Activated naive CD8-positive, alpha-beta T cell treated with anti-CD3 and anti-CD28 coated beads, Interleukin-2, amount 10 ng/mL, durations not matched to agents 7 days and 5 days (primary cell): ENCODE measurements at regions of chr21 and their contacts with region 1.

Region 1: GRCh38 chr21:34202553-34203372 is 129.4 kb downstream of the MRPS6 start:
- DNase-seq: no peak
- ATAC-seq: no peak
- H3K4me3 Mint-ChIP-seq: peak overlapping the region; percentile 85
- H3K27ac Mint-ChIP-seq: peak overlapping the region; percentile 78
- H3K4me1 Mint-ChIP-seq: peaks cover 48% of the 10 kb centered on the region
- H3K27me3 Mint-ChIP-seq: no peaks in the 10 kb centered on the region

Region 2: DNA sequence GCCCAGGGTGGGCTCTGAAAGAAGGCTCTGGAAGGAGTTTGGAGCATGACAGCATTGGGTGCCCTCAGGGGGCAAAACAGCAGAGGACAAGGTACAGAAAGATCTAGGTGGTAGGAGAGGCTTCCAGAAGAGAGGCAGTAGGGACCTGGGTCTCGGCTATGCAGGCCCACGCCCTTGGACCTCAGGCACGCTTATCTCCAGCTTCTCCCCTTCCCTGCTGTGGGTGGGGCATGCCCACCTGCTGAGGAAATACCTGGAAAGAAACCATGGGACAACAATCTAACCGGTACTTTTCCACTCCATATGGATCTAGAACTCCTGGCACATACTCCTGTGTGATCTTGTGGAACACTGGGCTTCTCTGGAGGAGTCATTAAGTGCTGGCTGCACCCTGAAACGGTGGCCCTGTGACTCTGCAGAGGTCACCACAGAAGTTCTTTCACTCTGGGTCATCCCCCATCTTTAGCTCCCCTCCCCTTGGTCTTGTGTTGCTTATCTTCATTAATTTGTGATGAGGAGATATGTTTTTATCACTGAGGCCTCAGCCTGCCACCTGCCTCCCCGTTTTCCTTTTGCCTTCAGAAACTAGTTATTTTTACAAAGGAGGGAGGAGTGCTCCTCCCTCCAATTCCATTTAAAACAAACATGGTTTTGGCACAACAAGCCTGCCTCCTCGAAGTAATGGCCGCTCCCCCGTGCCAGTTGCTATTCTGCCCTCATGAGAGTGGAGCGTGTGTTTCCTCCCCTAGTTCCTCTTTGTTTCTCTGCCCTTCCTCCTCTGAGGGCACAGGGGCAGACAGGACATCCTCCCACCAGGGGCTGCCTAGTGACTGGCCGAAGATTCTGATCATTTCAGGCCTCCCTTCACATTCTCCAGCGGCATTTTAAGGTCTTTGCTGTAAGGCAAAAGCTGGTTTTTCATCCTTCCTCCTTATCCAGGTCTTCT is 209.2 kb before region 1 on chr21:
- POLR2A ChIA-PET with region 1: no interaction called
- DNase-seq: no peak
- ATAC-seq: no peak
- H3K4me3 Mint-ChIP-seq: no peak overlapping the region
- H3K27ac Mint-ChIP-seq: peak overlapping the region; percentile 71
- H3K4me1 Mint-ChIP-seq: peaks cover 18% of the 10 kb centered on the region
- H3K27me3 Mint-ChIP-seq: no peaks in the 10 kb centered on the region

Region 3: DNA sequence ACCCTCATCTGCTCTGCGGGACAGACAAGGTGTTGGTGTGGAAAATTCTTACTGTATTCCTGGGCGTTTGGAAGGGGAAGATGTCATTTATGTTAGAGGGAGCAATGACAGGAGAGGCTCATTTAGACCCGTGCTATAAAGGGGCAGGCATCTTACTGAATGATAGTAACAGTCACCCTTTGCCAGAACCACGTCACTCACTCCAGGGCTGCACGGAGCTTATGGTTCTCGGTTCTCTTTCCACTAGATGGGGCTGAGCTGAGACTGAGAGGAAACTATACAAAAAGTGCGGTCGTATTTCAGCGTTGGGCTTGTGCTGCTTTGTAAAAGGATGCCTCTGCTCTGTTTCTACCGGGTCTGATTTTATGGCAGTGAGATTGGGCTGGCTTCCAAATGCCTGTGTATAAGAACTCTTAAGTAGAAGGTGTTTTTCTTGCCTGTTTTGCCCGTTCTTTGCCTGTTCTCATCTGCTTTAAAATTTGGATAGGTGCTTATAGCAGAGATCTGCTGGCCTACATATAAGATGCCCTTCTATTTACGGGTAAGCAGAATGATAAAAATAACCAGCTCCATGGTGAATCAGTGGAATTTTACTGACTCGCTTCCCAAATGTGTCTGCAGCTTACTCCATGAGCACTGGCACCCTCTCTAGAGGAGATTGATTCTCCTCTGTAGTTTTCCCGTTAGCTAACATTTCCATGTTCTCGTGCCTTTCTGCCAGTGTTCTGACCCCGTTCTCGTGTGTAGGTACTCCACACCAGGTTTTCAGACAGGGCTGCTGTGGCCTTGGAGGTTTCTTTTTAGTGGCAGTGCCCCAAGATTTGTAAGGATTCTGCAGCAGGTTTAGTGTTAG is 73.5 kb before region 1 on chr21:
- POLR2A ChIA-PET with region 1: interaction called, 20 read pairs
- DNase-seq: peak; percentile 51
- ATAC-seq: peak; percentile 95
- H3K4me3 Mint-ChIP-seq: peak overlapping the region; percentile 74
- H3K27ac Mint-ChIP-seq: peak overlapping the region; percentile 95
- H3K4me1 Mint-ChIP-seq: peaks cover 67% of the 10 kb centered on the region
- H3K27me3 Mint-ChIP-seq: no peaks in the 10 kb centered on the region

Region 4: DNA sequence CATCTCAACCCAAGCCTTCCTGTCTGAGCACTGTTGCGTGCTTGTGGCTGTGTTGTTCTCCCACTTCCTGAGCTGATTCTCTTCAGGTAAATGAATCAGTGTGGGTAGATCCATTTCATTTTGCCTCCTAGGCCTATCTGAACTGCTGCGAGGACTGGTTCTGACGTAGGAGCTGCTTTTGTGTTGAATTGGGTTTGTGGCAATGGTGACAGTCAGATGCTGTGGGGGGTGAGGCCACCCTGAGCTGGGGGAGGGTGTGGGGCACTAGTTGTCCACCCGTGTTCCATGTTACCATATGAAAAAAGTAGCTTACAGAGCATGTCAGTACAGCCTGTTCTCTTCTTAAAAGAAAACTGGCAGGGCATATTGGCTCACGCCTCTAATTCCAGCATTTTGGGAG is 47.9 kb before region 1 on chr21:
- POLR2A ChIA-PET with region 1: interaction called, 42 read pairs
- DNase-seq: peak; percentile 60
- ATAC-seq: peak; percentile 93
- H3K4me3 Mint-ChIP-seq: peak overlapping the region; percentile 54
- H3K27ac Mint-ChIP-seq: peak overlapping the region; percentile 85
- H3K4me1 Mint-ChIP-seq: peaks cover 45% of the 10 kb centered on the region
- H3K27me3 Mint-ChIP-seq: no peaks in the 10 kb centered on the region

Region 5: DNA sequence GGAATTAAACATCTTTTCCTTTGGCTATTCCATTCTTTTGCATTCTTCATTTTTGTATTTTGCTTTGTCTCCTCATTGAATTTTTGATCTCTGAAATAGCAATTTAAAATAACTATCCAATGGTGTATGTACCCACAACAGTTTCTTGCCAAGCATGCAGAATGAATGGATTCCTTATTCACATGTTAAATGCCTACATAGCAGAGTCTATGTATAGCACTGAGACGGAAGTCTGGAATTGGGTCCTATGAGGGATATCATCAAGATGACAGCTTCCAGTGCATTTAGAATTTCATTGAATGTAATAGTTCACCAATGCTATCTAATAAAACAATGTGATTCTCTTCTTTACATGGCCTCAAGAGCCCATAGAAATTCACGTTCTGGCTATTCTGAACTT is 31.9 kb before region 1 on chr21:
- POLR2A ChIA-PET with region 1: no interaction called
- DNase-seq: no peak
- ATAC-seq: no peak
- H3K4me3 Mint-ChIP-seq: no peak overlapping the region
- H3K27ac Mint-ChIP-seq: no peak overlapping the region
- H3K4me1 Mint-ChIP-seq: no peaks in the 10 kb centered on the region
- H3K27me3 Mint-ChIP-seq: no peaks in the 10 kb centered on the region